Mammary epithelial cell (primary cell): ENCODE measurements at regions of chr9 and their contacts with region 1.

Region 1: DNA sequence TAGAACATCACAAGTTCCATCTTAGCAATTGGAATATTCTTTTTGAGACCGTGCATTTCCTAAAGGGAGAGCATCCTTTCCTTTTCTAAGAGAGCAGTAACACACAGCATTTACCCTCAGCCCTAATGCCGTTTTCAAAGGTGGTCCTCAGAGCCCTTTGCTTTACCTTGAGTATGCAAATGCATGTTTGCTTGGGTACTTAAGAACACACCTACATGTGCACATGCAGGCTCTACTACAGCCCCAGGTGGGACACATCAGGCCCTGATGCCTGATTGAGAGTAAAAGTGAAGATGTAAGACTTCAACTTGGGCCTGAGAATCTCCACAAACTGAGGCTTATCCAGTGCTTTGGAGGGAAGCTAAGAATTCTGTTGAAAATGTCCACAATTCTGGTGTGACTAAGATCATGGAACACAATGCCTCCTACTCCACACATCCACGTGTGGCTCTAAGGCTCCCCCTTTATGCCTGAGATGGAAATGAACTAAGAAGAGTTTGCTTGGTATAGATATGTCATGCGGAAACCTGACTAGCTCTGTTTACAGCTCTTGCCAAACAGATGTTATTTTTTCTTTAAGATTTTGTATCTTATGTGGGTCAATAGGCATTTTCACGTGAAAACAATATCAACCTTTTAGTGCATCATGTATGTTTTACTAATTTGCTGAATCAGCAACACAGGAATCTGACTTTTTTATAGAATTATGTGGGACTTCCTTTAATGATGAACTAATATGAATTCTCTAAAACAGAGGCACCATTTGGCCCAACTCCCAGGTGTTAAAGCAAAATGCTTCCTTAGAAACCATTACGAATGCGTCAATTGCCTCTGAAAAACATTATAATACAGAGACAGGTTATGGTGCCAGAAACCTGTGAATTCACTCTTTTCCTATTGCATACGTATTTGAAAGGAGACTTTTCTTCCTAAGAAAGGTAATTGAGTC is 48.9 kb upstream of the SLC2A8 start:
- DNase-seq: peak; percentile 14
- H3K4me3 ChIP-seq: no peak overlapping the region
- H3K27ac ChIP-seq: no peak overlapping the region
- H3K4me1 ChIP-seq: no peaks in the 10 kb centered on the region
- H3K27me3 ChIP-seq: no peaks in the 10 kb centered on the region
- CTCF ChIP-seq: peak; percentile 51 to 76

Region 2: DNA sequence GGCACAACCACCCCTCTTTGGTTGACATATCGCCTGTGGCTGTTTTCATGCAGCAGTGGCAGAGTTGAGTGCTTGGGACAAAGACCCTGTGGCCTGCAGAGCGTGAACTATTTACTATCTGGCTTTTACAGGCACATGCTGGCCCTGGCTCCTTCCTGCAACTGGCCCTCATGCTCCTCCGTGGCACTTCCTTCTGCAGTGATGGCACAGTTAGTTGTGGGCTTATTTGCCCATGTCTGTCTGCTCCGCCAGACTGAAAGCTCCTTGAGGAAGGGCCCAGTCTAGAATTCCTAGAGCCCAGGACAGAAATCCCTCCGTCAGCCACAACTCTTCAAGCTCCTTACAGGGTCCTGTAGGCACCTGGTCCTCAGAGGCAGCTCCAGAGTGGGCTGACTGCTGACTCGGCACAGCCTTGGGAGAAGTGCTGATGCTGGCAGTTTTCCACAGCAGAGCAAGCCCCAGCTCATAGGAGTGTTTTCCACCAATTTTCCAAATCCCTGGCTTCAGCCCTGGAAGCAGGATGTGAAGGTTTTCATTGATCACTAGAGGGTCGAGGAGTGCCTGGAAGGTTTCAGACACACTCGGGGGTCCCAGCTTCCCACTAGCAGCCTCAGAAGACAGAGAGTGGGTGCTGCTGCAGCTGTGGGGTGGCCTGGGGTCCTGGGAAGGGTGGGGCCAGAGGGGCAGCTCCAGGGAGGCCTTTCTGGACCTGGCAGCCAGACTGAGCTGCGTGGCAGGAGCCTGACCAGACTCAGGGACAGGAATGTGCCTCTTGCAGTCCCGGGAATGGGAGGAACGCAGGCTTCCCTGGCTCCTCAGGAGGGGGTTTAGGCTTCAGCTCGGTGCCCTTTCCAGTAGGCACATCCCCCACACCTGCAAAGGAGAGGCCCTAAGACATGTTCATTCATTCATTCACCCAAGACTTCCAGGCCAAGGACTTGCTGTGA is 169.1 kb before region 1 on chr9:
- CTCF ChIA-PET with region 1: no interaction called
- dilution Hi-C with region 1: no loop called
- in situ Hi-C with region 1: no loop called
- intact Hi-C with region 1: no loop called
- DNase-seq: no peak
- H3K4me3 ChIP-seq: no peak overlapping the region
- H3K27ac ChIP-seq: no peak overlapping the region
- H3K4me1 ChIP-seq: no peaks in the 10 kb centered on the region
- H3K27me3 ChIP-seq: peaks cover 5% of the 10 kb centered on the region
- CTCF ChIP-seq: no peak

Region 3: GRCh38 chr9:127214421-127215267 is 133.5 kb before region 1 on chr9:
- CTCF ChIA-PET with region 1: interaction called, 3 read pairs
- dilution Hi-C with region 1: no loop called
- in situ Hi-C with region 1: loop called in 1 of 2 experiments (anchors 10 kb)
- intact Hi-C with region 1: loop called (anchors 1 kb)
- DNase-seq: peak; percentile 52
- H3K4me3 ChIP-seq: no peak overlapping the region
- H3K27ac ChIP-seq: no peak overlapping the region
- H3K4me1 ChIP-seq: no peaks in the 10 kb centered on the region
- H3K27me3 ChIP-seq: no peaks in the 10 kb centered on the region
- CTCF ChIP-seq: peak; percentile 85 to 92

Region 4: GRCh38 chr9:127283917-127284316 is 64.2 kb before region 1 on chr9:
- CTCF ChIA-PET with region 1: no interaction called
- dilution Hi-C with region 1: no loop called
- in situ Hi-C with region 1: no loop called
- intact Hi-C with region 1: loop called (anchors 1 kb)
- DNase-seq: peak; percentile 15
- H3K4me3 ChIP-seq: no peak overlapping the region
- H3K27ac ChIP-seq: no peak overlapping the region
- H3K4me1 ChIP-seq: no peaks in the 10 kb centered on the region
- H3K27me3 ChIP-seq: no peaks in the 10 kb centered on the region
- CTCF ChIP-seq: peak; percentile 16 to 51

Region 5: GRCh38 chr9:127418037-127418471 is 69.9 kb after region 1 on chr9:
- CTCF ChIA-PET with region 1: no interaction called
- dilution Hi-C with region 1: loop called (anchors 10 kb)
- in situ Hi-C with region 1: no loop called
- intact Hi-C with region 1: no loop called
- DNase-seq: no peak
- H3K4me3 ChIP-seq: no peak overlapping the region
- H3K27ac ChIP-seq: no peak overlapping the region
- H3K4me1 ChIP-seq: peaks cover 21% of the 10 kb centered on the region
- H3K27me3 ChIP-seq: no peaks in the 10 kb centered on the region
- CTCF ChIP-seq: peak in 1 of 2 donors; percentile 19